B cell (primary cell): ENCODE measurements at regions of chr6 and their contacts with region 1.

Region 1: GRCh38 chr6:114747987-114748630 is 405.3 kb upstream of the HS3ST5 start:
- DNase-seq: peak; percentile 19
- ATAC-seq: no peak
- H3K4me3 ChIP-seq: no peak overlapping the region
- H3K4me3 Mint-ChIP-seq: no peak overlapping the region
- H3K27ac ChIP-seq: no peak overlapping the region
- H3K27ac Mint-ChIP-seq: no peak overlapping the region
- H3K4me1 ChIP-seq: no peaks in the 10 kb centered on the region
- H3K4me1 Mint-ChIP-seq: no peaks in the 10 kb centered on the region
- H3K27me3 ChIP-seq: no peaks in the 10 kb centered on the region
- H3K27me3 Mint-ChIP-seq: no peaks in the 10 kb centered on the region
- CTCF ChIP-seq: peak; percentile 67

Region 2: GRCh38 chr6:115896538-115897129 is 1148.5 kb after region 1 on chr6:
- CTCF ChIA-PET with region 1: no interaction called
- POLR2A ChIA-PET with region 1: no interaction called
- intact Hi-C with region 1: loop called (anchors 5 kb)
- DNase-seq: no peak
- ATAC-seq: no peak
- H3K4me3 ChIP-seq: no peak overlapping the region
- H3K4me3 Mint-ChIP-seq: no peak overlapping the region
- H3K27ac ChIP-seq: no peak overlapping the region
- H3K27ac Mint-ChIP-seq: no peak overlapping the region
- H3K4me1 ChIP-seq: no peaks in the 10 kb centered on the region
- H3K4me1 Mint-ChIP-seq: no peaks in the 10 kb centered on the region
- H3K27me3 ChIP-seq: no peaks in the 10 kb centered on the region
- H3K27me3 Mint-ChIP-seq: peaks cover 10% of the 10 kb centered on the region
- CTCF ChIP-seq: peak; percentile 52